ENCODE measurements at regions of chr11 and their contacts with region 1.

Region 1: DNA sequence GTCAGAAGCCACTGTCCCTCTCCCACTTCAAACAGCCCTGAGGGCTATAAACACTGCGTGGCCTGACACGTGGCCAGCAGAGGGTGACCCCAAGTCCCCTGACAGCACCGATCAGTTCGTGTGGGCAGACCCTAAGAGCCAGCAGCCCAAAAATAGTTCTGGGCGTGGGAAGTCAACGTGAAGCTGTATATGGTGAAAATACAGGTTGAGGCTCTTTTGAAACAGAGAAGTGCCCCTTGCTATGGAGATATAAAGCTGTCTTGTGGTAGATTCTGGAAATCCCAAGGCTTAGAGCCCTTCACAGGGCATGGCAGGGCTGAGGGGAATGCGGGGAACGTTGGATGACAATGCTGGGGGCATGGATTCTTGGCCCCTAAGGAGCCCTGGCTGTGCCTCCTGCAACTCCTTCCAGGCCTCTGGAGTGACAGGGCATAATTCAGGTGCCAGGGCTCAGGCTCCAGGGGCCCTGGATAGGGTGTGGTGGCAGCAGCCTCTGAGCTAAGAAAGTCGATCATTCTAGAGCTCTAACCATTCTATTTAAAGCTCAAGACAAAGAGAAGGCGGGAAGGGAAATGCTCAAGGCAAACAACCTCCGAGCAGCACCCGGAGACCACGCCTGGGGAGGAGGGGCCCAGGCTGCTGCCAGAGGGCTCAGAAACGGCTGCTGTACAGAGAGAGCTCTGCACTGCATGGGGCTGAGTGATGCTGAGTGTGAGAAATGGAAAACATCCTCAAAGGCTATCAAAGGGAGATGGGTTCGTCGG is 60.4 kb upstream of the CD5 start:
- DNase-seq: peak; percentile 72 to 95 (median 86)
- ATAC-seq: peak; percentile 98 to 99
- H3K4me3 Mint-ChIP-seq: peak overlapping the region; percentile 67 to 87 (median 78)
- H3K27ac Mint-ChIP-seq: peak overlapping the region; percentile 95 to 99 (median 98)
- H3K4me1 Mint-ChIP-seq: peaks cover 25 to 55% (median 47%) of the 10 kb centered on the region in 4 donors
- H3K27me3 Mint-ChIP-seq: no peaks in the 10 kb centered on the region

Region 2: GRCh38 chr11:60265373-60266214 is 776.3 kb before region 1 on chr11:
- POLR2A ChIA-PET with region 1: no interaction called
- DNase-seq: peak in 2 of 10 donors; percentile 4 to 6
- ATAC-seq: no peak
- H3K4me3 Mint-ChIP-seq: no peak overlapping the region
- H3K27ac Mint-ChIP-seq: no peak overlapping the region
- H3K4me1 Mint-ChIP-seq: no peaks in the 10 kb centered on the region
- H3K27me3 Mint-ChIP-seq: peaks cover 0 to 17% (median 3%) of the 10 kb centered on the region in 5 donors

Region 3: DNA sequence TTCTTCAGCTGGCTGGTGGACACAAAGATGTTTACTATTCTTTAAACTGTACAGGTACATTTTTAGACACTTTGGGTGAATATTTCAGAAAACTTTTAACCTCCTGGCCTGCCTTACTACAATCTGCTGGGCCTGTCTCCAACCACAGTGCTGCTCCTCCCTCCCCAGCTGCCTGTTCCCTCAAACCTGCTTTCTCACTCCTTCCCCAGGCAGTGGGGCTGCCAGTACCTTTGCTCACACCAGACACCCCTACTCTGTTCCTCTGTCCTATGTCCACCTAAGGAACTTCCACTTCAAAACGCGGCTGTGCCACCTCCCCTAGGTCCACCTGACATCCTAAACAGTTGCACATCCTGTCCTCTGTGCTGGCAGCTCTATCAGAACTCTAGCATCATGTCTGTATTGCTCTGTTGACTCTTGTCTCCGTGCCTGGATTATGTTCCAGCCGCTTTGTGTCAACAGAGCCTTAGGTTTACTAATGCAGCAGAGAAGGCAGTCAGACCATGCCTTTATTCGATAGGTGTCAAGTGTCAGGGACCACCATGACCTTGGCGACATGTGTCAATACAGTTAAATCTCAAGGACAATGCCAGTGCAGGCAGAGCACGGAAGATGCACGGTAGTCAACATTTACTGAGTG is 161.2 kb before region 1 on chr11:
- POLR2A ChIA-PET with region 1: no interaction called
- DNase-seq: no peak
- ATAC-seq: no peak
- H3K4me3 Mint-ChIP-seq: no peak overlapping the region
- H3K27ac Mint-ChIP-seq: peak overlapping the region in 3 of 10 donors; percentile 8 to 92 (median 79)
- H3K4me1 Mint-ChIP-seq: peaks cover 0 to 14% (median 8%) of the 10 kb centered on the region in 4 donors
- H3K27me3 Mint-ChIP-seq: no peaks in the 10 kb centered on the region

Region 4: DNA sequence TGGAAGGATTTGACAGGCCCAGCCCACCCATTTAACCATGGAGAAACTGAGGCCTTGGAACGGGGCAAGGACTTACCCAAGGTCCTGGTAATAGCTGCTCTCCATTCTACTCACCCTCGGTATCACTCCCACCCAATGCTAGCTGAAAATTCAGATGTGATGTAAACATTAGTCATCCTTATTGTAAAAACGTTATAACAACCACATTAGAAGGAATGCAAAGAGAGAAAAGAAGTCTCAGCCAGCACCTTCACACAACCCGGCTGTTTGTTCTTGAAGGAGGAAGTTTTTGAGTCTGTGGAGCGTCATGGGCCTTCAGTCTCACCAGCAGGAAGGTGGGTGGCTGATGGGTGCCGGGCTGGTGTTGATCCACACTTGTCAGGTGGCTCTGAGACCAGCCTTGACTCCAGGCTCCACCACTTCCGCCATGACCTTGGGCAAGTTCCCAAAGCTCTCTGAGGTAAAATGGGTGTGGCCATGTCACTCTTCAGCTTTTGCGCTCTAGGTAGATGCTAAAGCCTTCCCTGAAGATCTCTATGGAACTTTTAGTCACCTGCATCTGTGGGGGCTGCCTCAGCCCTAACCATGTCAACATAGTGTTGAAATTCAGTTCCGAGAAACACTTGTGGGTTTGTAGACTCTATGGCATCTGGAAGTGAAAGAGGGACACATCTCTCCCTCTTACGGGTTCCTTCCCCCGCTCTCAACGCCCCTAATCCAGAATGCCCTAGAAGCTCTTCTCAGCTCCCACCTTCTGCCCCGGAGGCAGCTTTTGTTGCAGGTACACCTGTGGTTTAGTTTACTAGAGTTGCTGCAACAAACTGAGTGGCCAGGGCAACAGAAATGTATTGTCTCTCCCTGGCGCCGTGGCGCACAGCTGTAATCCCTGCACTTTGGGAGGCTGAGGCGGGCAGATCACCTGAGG is 55.7 kb before region 1 on chr11:
- POLR2A ChIA-PET with region 1: interaction called, 18 read pairs
- DNase-seq: peak; percentile 76 to 98 (median 95)
- ATAC-seq: peak; percentile 87 to 91
- H3K4me3 Mint-ChIP-seq: peak overlapping the region; percentile 54 to 85 (median 76)
- H3K27ac Mint-ChIP-seq: peak overlapping the region; percentile 93 to 100 (median 99)
- H3K4me1 Mint-ChIP-seq: peaks cover 44 to 93% (median 90%) of the 10 kb centered on the region in 4 donors
- H3K27me3 Mint-ChIP-seq: no peaks in the 10 kb centered on the region

Region 5: DNA sequence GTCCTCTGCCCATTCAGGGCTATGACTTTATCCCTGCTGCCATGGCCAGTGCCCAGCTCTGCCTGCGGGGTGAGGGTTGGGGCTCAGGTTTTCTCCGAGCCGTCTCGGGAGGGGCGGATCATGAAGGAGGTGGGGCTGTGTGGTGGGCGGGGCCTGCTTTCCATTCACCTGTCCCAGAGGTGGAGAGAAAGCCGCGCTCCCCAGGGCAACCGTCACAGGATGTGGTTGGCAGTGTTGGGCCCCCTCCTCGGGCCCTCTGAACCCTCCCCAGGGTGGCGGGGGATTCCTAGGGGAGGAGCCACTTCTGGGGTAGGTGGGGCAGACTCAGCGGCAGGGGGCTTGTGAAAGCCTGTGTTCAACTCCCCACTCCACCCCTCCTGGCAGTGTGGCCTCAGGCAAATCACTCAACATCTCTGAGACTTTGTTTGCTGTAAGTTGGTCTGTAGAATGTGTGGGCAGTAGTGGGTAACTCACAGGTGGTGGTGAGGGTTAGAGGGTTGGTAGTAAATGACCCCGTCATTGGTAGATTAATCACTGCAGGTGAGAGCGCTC is 20.2 kb before region 1 on chr11:
- POLR2A ChIA-PET with region 1: interaction called, 122 read pairs
- DNase-seq: peak; percentile 72 to 97 (median 93)
- ATAC-seq: peak; percentile 60 to 81
- H3K4me3 Mint-ChIP-seq: peak overlapping the region; percentile 68 to 86 (median 76)
- H3K27ac Mint-ChIP-seq: peak overlapping the region; percentile 89 to 100 (median 98)
- H3K4me1 Mint-ChIP-seq: peaks cover 44 to 85% (median 72%) of the 10 kb centered on the region in 4 donors
- H3K27me3 Mint-ChIP-seq: no peaks in the 10 kb centered on the region

Region 6: DNA sequence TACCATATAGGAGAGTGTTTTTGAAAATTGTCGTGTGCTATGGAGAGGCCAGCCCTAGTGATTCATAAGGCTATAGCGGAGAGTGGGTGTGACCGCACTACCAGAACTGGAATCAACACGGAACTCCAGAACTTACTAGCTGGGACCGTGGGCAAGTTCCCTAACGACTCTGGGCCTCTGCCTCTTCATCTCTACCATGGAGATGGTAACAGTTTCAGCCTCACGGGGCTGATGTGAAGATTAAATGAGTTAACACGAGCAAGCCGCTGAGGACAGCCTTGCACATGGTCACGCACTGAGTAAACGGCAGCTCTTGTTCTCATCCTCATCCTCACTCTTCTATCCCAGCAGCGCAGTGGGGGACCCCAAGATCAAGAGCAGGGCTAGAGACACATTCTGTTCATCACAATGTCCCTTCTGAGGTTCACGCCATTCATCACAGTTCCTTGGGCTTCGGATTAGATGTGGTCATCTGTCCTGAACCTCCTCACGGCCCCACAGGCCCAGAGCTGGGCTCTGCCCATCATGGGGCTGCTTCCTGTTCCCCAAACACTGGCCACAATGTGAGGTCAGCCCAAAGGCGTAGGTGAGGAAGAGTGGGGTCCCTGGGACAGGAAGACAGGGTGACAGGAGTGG is 13.1 kb after region 1 on chr11:
- POLR2A ChIA-PET with region 1: interaction called, 30 read pairs
- DNase-seq: no peak
- ATAC-seq: no peak
- H3K4me3 Mint-ChIP-seq: no peak overlapping the region
- H3K27ac Mint-ChIP-seq: peak overlapping the region in 2 of 10 donors; percentile 31 to 50
- H3K4me1 Mint-ChIP-seq: peaks cover 11 to 49% (median 33%) of the 10 kb centered on the region in 4 donors
- H3K27me3 Mint-ChIP-seq: no peaks in the 10 kb centered on the region

Region 7: GRCh38 chr11:61071208-61071681 is 29.3 kb after region 1 on chr11:
- POLR2A ChIA-PET with region 1: interaction called, 69 read pairs
- DNase-seq: peak in 8 of 10 donors; percentile 45 to 81 (median 69)
- ATAC-seq: peak; percentile 97 to 99
- H3K4me3 Mint-ChIP-seq: peak overlapping the region; percentile 64 to 87 (median 78)
- H3K27ac Mint-ChIP-seq: peak overlapping the region; percentile 90 to 98 (median 96)
- H3K4me1 Mint-ChIP-seq: peaks cover 38 to 88% (median 85%) of the 10 kb centered on the region in 4 donors
- H3K27me3 Mint-ChIP-seq: no peaks in the 10 kb centered on the region

Region 8: DNA sequence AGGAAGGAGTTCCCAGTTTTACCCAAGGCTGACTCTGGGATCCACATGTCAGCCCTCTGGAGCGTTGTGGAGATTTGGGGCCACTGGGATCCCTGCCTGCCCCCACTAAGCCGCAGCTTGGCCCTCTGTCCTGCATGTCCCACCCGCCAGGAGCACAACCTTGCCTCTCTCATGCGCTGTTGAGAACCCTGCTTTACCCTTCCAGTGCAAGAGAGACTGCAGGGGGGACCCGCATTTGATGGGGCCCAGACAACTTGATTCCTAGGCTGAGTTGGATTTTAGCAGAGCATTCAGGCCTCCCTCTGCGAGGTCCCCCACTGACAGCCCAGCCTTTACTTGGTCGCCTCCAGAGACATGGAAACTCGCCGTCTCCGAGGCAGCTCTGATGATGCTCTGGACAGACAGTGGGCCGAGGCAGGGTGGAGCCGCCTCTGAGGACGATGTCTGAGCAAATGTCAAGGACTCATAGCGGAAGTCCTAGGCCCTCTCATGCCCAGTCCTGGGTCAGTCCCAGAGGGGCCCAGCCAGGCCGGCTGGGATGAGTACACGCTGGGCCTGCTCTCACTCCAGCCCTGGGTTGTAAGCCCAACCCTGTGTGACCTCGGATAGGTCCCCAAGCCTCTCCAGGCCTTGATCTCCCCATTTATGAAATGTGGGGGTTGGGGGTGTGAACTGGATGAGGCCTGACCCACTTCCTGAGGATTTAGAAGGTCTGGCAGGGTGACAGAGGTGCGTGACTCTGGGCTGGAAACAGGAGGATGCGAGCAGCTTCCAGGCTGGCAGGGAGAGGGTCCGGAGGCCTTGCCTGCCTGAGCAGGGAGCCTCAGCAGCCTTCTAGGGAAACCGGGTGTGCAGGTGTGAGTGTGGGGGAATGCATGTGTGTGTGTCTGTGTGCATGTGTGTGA is 61.0 kb after region 1 on chr11:
- POLR2A ChIA-PET with region 1: interaction called, 11 read pairs
- DNase-seq: peak in 2 of 10 donors; percentile 42 to 53
- ATAC-seq: peak; percentile 35 to 45
- H3K4me3 Mint-ChIP-seq: no peak overlapping the region
- H3K27ac Mint-ChIP-seq: peak overlapping the region in 1 of 10 donors; percentile 100
- H3K4me1 Mint-ChIP-seq: peaks cover 24 to 46% (median 42%) of the 10 kb centered on the region in 4 donors
- H3K27me3 Mint-ChIP-seq: no peaks in the 10 kb centered on the region

Region 9: GRCh38 chr11:61120706-61121191 is 78.8 kb after region 1 on chr11:
- POLR2A ChIA-PET with region 1: interaction called, 13 read pairs
- DNase-seq: peak; percentile 39 to 93 (median 80)
- ATAC-seq: peak; percentile 89 to 94
- H3K4me3 Mint-ChIP-seq: peak overlapping the region; percentile 71 to 90 (median 84)
- H3K27ac Mint-ChIP-seq: peak overlapping the region; percentile 95 to 100 (median 100)
- H3K4me1 Mint-ChIP-seq: peaks cover 49 to 76% (median 63%) of the 10 kb centered on the region in 4 donors
- H3K27me3 Mint-ChIP-seq: no peaks in the 10 kb centered on the region